Lower leg skin (tissue), 4 donors: ENCODE measurements at regions of chr9 and their contacts with region 1.

Region 1: GRCh38 chr9:4604678-4605095 is 57.4 kb upstream of the PLPP6 start:
- DNase-seq: peak; percentile 79 to 87
- H3K4me3 ChIP-seq: no peak overlapping the region
- CTCF ChIP-seq: no peak
- POLR2A ChIP-seq: no peak

Region 2: GRCh38 chr9:3285365-3286161 is 1319.1 kb before region 1 on chr9:
- intact Hi-C with region 1: no loop called
- DNase-seq: no peak
- H3K4me3 ChIP-seq: no peak overlapping the region
- CTCF ChIP-seq: no peak
- POLR2A ChIP-seq: no peak

Region 3: GRCh38 chr9:4382722-4383317 is 221.9 kb before region 1 on chr9:
- intact Hi-C with region 1: loop called (anchors 5 kb)
- DNase-seq: no peak
- H3K4me3 ChIP-seq: no peak overlapping the region
- CTCF ChIP-seq: no peak
- POLR2A ChIP-seq: no peak

Region 4: GRCh38 chr9:4508246-4508906 is 96.3 kb before region 1 on chr9:
- intact Hi-C with region 1: no loop called
- DNase-seq: no peak
- H3K4me3 ChIP-seq: no peak overlapping the region
- CTCF ChIP-seq: no peak
- POLR2A ChIP-seq: no peak

Region 5: DNA sequence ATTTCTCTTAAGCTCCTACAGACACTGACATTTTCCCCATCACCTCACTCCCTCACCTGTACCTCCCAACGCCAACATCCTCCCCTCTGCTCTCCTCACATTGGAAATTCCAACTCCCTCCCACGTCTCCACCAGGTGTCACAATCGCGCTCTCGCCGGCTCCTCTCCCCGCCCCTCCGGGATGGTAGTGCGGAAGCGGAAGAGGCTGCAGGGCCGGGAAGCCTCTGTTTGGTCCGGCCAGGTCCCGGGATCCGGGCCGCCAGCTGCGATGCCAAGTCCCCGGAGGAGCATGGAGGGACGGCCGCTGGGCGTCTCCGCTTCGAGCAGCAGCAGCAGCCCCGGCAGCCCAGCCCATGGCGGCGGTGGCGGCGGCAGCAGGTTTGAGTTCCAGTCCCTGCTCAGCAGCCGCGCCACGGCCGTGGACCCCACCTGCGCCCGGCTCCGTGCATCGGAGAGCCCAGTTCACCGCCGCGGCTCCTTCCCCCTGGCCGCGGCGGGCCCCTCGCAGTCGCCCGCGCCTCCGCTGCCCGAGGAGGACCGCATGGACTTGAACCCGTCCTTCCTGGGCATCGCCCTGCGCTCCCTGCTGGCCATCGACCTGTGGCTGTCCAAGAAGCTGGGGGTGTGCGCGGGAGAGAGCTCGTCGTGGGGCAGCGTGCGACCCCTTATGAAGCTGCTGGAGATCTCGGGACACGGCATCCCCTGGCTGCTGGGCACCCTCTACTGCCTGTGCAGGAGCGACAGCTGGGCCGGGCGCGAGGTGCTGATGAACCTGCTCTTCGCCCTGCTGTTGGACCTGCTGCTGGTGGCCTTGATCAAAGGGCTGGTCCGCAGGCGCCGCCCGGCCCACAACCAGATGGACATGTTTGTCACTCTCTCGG is 57.7 kb after region 1 on chr9 and contains the start of gene PLPP6:
- intact Hi-C with region 1: no loop called
- DNase-seq: peak; percentile 88 to 97
- H3K4me3 ChIP-seq: peak within 1 kb of the TSS; percentile 71
- CTCF ChIP-seq: peak in 1 of 3 donors; percentile 16
- POLR2A ChIP-seq: peak in 1 of 2 donors; percentile 54
- total RNA-seq, gene PLPP6: 13.6 to 20.7 (median 17.7) TPM